B cell (primary cell): ENCODE measurements at regions of chr9 and their contacts with region 1.

Region 1: DNA sequence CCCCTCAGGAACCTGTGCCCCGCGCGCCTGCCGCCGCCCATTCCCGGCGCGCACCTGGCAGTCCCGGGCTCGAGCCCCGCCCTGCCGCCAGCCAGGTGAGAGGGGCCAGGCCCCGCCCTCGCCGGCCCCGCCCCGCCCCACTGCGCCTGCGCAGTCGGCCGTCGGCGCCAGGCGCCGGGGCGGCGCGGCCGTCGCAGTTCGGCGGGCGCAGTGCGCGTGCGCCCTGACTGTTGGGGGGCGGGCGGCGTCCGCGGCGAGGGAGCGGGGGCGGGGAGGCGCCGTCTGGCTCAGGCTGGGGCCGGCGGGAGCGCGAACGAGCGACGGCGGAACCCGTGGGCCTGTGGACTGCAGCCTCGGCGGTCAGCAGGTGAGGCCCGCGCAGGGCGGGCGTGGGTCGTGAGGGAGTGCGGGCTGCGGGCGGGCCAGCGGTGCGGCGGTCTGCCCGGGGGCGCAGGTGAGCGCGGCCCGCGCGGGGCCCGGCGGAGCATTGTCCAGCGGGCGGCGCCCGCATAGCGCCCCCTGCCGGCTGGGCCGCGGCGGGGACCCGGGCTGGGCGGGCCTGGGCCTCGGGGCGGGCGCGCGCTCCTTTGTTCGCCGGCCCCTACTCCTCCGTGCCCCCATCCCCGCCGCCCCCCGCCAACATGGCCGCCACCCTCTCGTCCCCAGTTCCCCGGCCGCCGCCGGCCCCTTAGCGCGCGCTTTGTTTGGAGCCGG is at the start of gene SPIN1:
- DNase-seq: peak; percentile 95
- ATAC-seq: peak; percentile 80
- H3K4me3 ChIP-seq: peak within 1 kb of the TSS; percentile 61 to 91 (median 83)
- H3K4me3 Mint-ChIP-seq: peak within 1 kb of the TSS; percentile 98
- H3K27ac ChIP-seq: peak within 1 kb of the TSS in 1 of 2 donors; percentile 59
- H3K27ac Mint-ChIP-seq: peak within 1 kb of the TSS; percentile 97
- H3K4me1 ChIP-seq: peaks cover 11 to 21% of the 10 kb centered on the region in 2 donors
- H3K4me1 Mint-ChIP-seq: peaks cover 32% of the 10 kb centered on the region
- H3K27me3 ChIP-seq: no peaks in the 10 kb centered on the region
- H3K27me3 Mint-ChIP-seq: no peaks in the 10 kb centered on the region
- CTCF ChIP-seq: peak; percentile 41
- total RNA-seq, gene SPIN1: 24.9 and 30.2 TPM in 2 replicates

Region 2: DNA sequence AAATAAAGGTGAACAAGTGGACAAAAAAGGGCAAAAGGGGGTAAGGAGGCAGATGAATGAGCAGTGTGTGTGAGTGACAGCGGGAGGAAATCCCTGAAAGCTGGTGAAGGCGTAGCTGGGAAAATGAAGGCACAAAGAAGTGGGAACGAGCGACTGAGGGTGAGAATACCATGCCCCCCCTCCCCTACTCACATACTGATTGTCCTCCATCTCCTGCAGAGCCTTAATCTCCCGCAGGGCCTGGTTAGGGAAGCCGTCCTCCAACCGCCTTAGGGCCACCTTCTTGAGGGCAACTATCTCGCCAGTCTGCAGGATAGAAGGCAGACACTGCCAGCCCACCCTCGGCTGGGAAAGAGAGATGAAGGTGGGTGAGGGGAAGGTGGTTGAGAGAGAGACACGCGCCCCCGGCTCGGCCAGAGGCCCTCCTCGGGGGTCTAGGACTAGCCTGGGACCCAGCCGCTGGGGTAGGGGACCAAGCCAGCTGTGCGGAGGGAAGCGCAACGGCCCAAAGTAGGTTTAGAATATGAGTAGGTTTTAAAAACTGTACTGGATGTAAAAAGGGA is 414.5 kb before region 1 on chr9:
- CTCF ChIA-PET with region 1: no interaction called
- POLR2A ChIA-PET with region 1: no interaction called
- intact Hi-C with region 1: loop called (anchors 5 kb)
- DNase-seq: no peak
- ATAC-seq: peak; percentile 5
- H3K4me3 ChIP-seq: peak overlapping the region in 3 of 5 experiments; percentile 20 to 41 (median 30)
- H3K4me3 Mint-ChIP-seq: peak overlapping the region; percentile 91
- H3K27ac ChIP-seq: peak overlapping the region; percentile 46 to 73
- H3K27ac Mint-ChIP-seq: peak overlapping the region; percentile 91
- H3K4me1 ChIP-seq: peaks cover 15 to 17% of the 10 kb centered on the region in 2 donors
- H3K4me1 Mint-ChIP-seq: peaks cover 22% of the 10 kb centered on the region
- H3K27me3 ChIP-seq: peaks cover 0 to 8% (median 3%) of the 10 kb centered on the region in 4 experiments
- H3K27me3 Mint-ChIP-seq: peaks cover 13% of the 10 kb centered on the region
- CTCF ChIP-seq: no peak

Region 3: DNA sequence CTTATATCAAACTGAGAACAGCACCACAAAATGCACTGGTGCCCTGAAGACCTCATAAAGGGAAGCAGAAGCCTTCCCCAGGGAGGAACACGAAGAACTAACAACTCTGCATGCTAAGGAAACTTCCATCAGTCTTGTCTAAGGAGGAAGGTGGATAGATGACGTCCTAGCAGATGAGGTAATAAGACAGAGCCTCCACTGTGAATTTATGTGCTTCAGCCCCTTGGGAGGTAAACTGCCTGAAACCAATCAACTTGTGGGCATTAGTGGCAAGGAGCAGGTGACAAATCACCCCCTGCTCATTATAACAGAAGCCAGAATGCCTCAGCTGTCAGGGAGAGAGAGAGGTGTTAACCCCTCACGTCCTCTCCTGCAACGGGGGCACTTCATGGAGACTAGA is 49.0 kb before region 1 on chr9:
- CTCF ChIA-PET with region 1: no interaction called
- POLR2A ChIA-PET with region 1: no interaction called
- intact Hi-C with region 1: no loop called
- DNase-seq: no peak
- ATAC-seq: no peak
- H3K4me3 ChIP-seq: no peak overlapping the region
- H3K4me3 Mint-ChIP-seq: no peak overlapping the region
- H3K27ac ChIP-seq: no peak overlapping the region
- H3K27ac Mint-ChIP-seq: no peak overlapping the region
- H3K4me1 ChIP-seq: no peaks in the 10 kb centered on the region
- H3K4me1 Mint-ChIP-seq: peaks cover 4% of the 10 kb centered on the region
- H3K27me3 ChIP-seq: peaks cover 0 to 3% (median 0%) of the 10 kb centered on the region in 4 experiments
- H3K27me3 Mint-ChIP-seq: peaks cover 3% of the 10 kb centered on the region
- CTCF ChIP-seq: no peak

Region 4: DNA sequence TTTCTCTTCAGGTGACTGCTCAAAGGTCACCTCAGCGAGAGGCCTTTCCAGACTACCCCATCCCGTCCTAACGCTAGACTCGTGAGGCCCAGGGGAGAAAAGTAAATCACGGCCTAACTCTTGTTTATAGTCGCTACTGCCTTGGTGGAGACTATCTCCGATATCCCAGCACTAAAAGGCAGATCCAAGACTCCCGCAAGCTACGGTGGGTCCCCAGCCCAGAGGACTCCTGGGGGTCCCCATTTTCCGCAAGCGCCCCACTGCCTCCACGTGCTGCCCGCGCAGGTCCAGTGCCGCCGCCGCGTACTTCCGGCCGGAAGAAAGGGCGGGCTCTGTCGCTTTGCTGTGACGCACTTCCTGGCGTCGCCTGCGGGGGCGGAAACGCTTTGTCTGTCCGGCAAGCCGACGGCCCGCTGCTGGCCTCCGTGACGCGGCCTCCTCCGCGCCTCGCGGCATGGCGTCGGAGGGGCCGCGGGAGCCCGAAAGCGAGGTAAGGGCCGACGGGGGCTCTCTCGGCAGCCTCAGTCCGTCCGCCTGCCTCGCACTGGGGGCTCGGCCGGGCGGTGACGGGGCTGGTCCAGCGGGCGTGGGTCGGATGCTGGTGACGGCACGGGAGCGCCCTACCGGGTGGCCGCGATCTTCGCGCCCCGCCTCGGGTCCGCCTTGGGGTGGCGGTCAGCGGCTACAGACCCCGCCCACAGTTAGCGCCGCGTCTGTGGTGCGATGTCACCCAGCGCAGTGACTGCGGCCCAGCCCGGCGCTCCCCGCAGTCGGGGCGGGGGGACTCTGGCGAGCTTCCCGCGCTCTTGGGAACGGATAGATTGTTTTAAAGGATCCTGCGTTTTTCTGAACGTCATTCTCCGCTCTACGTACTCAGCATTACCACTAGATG is 930.0 kb after region 1 on chr9 and contains the start of gene SECISBP2:
- CTCF ChIA-PET with region 1: no interaction called
- POLR2A ChIA-PET with region 1: no interaction called
- intact Hi-C with region 1: loop called (anchors 5 kb)
- DNase-seq: peak; percentile 97
- ATAC-seq: peak; percentile 91
- H3K4me3 ChIP-seq: peak within 1 kb of the TSS; percentile 56 to 93 (median 81)
- H3K4me3 Mint-ChIP-seq: peak within 1 kb of the TSS; percentile 89
- H3K27ac ChIP-seq: peak within 1 kb of the TSS; percentile 96 to 99
- H3K27ac Mint-ChIP-seq: peak within 1 kb of the TSS; percentile 93
- H3K4me1 ChIP-seq: peaks cover 20 to 21% of the 10 kb centered on the region in 2 donors
- H3K4me1 Mint-ChIP-seq: peaks cover 65% of the 10 kb centered on the region
- H3K27me3 ChIP-seq: no peaks in the 10 kb centered on the region
- H3K27me3 Mint-ChIP-seq: no peaks in the 10 kb centered on the region
- CTCF ChIP-seq: peak; percentile 82
- total RNA-seq, gene SECISBP2: 124 and 130 TPM in 2 replicates